Colonic mucosa (tissue), 4 donors: ENCODE measurements at regions of chr6 and their contacts with region 1.

Region 1: GRCh38 chr6:166956444-166957086 is at the start of gene RNASET2:
- DNase-seq: peak; percentile 99
- H3K4me3 ChIP-seq: peak within 1 kb of the TSS; percentile 96
- H3K27ac ChIP-seq: peak within 1 kb of the TSS; percentile 95
- H3K4me1 ChIP-seq: peaks cover 13% of the 10 kb centered on the region
- H3K27me3 ChIP-seq: no peaks in the 10 kb centered on the region
- CTCF ChIP-seq: no peak
- total RNA-seq, gene RNASET2: 87.1 to 126 TPM

Region 2: GRCh38 chr6:166707045-166707444 is 249.5 kb before region 1 on chr6:
- intact Hi-C with region 1: no loop called
- DNase-seq: peak; percentile 39
- H3K4me3 ChIP-seq: no peak overlapping the region
- H3K27ac ChIP-seq: no peak overlapping the region
- H3K4me1 ChIP-seq: no peaks in the 10 kb centered on the region
- H3K27me3 ChIP-seq: no peaks in the 10 kb centered on the region
- CTCF ChIP-seq: peak; percentile 38

Region 3: DNA sequence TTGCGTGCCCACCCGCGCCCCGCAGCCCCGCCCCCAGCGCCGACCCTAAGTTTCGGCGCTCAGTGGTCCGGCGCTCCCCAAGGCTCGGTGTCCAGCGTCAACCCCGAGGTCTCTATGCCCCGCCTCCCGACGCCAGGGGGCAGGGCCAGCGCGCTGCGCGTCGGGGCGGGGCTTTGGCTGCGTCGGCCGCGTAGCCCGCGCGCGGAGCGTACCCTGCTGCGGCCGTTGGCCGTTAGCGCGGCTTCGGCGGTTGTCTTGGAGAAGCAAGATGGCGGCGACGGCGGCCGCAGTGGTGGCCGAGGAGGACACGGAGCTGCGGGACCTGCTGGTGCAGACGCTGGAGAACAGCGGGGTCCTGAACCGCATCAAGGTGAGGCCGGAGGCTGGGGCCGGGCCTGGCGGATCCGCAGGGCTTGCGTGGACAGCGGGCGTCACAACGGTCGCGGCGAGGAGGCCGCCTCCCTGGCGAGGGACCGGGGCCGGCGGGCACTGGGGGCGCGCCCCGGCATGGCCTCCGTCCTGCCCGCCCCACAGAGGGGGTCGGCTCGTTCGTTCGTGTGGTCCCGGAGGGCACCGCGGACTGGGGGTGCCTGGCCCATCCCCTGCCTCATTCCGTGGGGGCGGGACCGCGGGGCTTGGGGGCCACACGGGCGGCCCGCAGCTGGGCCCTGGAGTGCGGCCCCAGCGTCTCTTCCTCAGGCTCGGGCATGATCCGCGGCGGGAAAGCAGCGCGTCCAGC is 42.7 kb after region 1 on chr6 and contains the start of gene CEP43:
- intact Hi-C with region 1: loop called (anchors 5 kb)
- DNase-seq: peak; percentile 93
- H3K4me3 ChIP-seq: peak within 1 kb of the TSS; percentile 98
- H3K27ac ChIP-seq: peak within 1 kb of the TSS; percentile 72
- H3K4me1 ChIP-seq: peaks cover 7% of the 10 kb centered on the region
- H3K27me3 ChIP-seq: no peaks in the 10 kb centered on the region
- CTCF ChIP-seq: no peak
- total RNA-seq, gene CEP43: 17.3 to 23.8 TPM